ENCODE measurements at regions of chr12 and their contacts with region 1.

Region 1: DNA sequence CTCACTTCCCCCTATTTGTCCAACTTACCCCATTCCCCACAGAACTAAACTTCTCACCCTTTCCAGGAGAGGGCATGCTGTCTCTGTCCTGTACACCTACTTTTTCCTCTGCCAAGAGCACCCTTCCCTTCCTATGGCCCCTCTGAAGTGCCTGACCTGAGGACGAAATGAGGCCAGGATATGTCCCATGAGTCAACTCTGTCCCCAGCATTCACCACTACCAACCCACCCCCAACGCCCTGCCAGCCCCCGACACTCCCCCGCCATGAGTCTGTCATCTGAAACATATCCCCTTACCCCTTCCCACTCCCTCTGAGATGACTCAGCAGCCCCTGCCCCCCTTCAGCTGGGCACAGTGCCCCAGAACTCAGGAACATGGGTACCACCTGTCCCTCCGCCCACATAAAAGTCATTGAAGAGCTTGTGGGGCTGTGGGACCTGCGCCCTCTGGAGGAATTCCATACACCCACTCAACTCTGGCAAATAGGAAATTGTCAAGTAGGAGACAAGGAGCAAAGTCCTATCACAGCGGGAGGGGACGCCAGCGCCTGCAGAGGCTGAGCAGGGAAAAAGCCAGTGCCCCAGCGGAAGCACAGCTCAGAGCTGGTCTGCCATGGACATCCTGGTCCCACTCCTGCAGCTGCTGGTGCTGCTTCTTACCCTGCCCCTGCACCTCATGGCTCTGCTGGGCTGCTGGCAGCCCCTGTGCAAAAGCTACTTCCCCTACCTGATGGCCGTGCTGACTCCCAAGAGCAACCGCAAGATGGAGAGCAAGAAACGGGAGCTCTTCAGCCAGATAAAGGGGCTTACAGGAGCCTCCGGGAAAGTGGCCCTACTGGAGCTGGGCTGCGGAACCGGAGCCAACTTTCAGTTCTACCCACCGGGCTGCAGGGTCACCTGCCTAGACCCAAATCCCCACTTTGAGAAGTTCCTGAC is 26.3 kb downstream of the ITGA7 start:
- DNase-seq: peak; percentile 90 to 92
- ATAC-seq: peak; percentile 93 to 96
- H3K4me3 ChIP-seq: peak overlapping the region; percentile 52
- H3K27ac ChIP-seq: peak overlapping the region; percentile 66 to 87
- H3K4me1 ChIP-seq: peaks cover 14% of the 10 kb centered on the region; the same call in 2 of the 3 replicates
- CTCF ChIP-seq: peak; percentile 71
- EP300 ChIP-seq: no peak
- POLR2A ChIP-seq: peak; percentile 86
- RAD21 ChIP-seq: peak in 1 of 2 experiments; percentile 47; a peak in 3 of 5 replicates

Region 2: GRCh38 chr12:55499810-55500252 is 181.6 kb before region 1 on chr12:
- CTCF ChIA-PET with region 1: no interaction called
- POLR2A ChIA-PET with region 1: no interaction called
- DNase-seq: no peak
- ATAC-seq: no peak
- H3K4me3 ChIP-seq: no peak overlapping the region
- H3K27ac ChIP-seq: no peak overlapping the region
- H3K4me1 ChIP-seq: no peaks in the 10 kb centered on the region
- CTCF ChIP-seq: no peak
- EP300 ChIP-seq: no peak
- POLR2A ChIP-seq: no peak
- RAD21 ChIP-seq: no peak

Region 3: DNA sequence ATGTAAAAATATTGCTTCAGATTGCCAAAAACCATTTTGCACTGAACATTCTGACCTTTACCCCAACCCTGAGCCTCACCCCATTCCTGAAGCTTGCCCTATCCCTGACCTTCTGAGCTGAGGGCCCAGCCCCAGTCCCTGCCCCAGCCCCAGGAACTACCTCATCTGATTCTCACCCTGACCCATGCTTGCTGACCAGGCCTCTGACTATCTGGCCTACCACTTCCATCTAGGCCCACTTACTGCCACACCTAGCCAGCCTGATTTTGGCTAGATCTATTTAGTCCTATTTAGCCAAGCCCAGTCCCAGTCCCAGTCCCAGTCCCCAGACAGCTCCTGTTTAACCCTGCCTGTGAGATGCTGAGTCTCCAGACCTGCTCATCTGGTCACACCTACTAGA is 11.1 kb before region 1 on chr12:
- CTCF ChIA-PET with region 1: interaction called, 10 read pairs
- POLR2A ChIA-PET with region 1: no interaction called
- DNase-seq: no peak
- ATAC-seq: peak in 1 of 2 experiments; percentile 45; a peak in 3 of 6 replicates
- H3K4me3 ChIP-seq: no peak overlapping the region
- H3K27ac ChIP-seq: no peak overlapping the region
- H3K4me1 ChIP-seq: no peaks in the 10 kb centered on the region
- CTCF ChIP-seq: no peak
- EP300 ChIP-seq: no peak
- POLR2A ChIP-seq: no peak
- RAD21 ChIP-seq: no peak

Region 4: DNA sequence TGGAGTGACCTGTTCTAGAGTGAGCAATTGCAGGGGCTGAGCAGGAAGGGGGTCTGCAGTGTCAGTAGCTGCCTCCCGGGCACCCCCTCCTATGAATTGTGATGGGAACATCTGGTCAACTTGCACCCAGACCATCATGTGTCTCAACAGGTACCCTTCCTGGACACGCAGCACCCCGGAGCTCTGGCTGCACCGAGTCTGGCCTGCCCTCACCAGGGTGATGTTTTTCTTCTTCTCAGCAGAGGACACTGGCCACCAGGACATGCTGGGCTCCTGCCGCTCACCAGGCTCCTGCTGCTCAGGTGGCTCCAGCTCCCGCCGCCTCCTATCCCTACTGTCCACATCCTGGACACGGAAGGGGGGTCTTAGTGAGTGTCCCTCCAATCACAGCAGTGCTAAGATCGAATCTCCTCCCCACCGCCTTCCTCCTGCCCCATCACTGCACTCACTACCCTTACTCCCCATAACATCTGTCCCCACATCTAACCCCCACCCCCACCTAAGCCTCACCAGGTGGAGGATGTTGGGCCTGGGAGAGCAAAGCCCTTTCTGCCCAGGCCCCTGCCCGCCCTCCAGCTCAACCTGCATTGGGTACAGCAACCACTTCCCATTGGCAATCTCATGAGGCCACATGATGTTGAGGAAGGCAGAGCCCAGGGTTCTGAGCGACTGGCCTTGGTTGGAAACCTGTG is 11.4 kb after region 1 on chr12:
- CTCF ChIA-PET with region 1: interaction called, 12 read pairs
- POLR2A ChIA-PET with region 1: no interaction called
- DNase-seq: no peak
- ATAC-seq: no peak
- H3K4me3 ChIP-seq: no peak overlapping the region
- H3K27ac ChIP-seq: no peak overlapping the region
- H3K4me1 ChIP-seq: no peaks in the 10 kb centered on the region
- CTCF ChIP-seq: no peak
- EP300 ChIP-seq: no peak
- POLR2A ChIP-seq: no peak
- RAD21 ChIP-seq: no peak

Region 5: GRCh38 chr12:55707841-55708694 is 26.7 kb after region 1 on chr12 and contains the start of gene ITGA7:
- CTCF ChIA-PET with region 1: interaction called, 10 read pairs
- POLR2A ChIA-PET with region 1: no interaction called
- DNase-seq: peak in 1 of 2 experiments; percentile 77
- ATAC-seq: peak; percentile 67 to 82
- H3K4me3 ChIP-seq: peak within 1 kb of the TSS; percentile 86
- H3K27ac ChIP-seq: peak within 1 kb of the TSS; percentile 50 to 79; a peak in 5 of 6 replicates
- H3K4me1 ChIP-seq: peaks cover 16% of the 10 kb centered on the region; the same call in 2 of the 3 replicates
- CTCF ChIP-seq: no peak
- EP300 ChIP-seq: no peak
- POLR2A ChIP-seq: no peak
- RAD21 ChIP-seq: no peak
- polyA plus RNA-seq, gene ITGA7: 1.1 and 1.4 TPM in 2 replicates